ENCODE measurements at regions of chr6 and their contacts with region 1.

Region 1: DNA sequence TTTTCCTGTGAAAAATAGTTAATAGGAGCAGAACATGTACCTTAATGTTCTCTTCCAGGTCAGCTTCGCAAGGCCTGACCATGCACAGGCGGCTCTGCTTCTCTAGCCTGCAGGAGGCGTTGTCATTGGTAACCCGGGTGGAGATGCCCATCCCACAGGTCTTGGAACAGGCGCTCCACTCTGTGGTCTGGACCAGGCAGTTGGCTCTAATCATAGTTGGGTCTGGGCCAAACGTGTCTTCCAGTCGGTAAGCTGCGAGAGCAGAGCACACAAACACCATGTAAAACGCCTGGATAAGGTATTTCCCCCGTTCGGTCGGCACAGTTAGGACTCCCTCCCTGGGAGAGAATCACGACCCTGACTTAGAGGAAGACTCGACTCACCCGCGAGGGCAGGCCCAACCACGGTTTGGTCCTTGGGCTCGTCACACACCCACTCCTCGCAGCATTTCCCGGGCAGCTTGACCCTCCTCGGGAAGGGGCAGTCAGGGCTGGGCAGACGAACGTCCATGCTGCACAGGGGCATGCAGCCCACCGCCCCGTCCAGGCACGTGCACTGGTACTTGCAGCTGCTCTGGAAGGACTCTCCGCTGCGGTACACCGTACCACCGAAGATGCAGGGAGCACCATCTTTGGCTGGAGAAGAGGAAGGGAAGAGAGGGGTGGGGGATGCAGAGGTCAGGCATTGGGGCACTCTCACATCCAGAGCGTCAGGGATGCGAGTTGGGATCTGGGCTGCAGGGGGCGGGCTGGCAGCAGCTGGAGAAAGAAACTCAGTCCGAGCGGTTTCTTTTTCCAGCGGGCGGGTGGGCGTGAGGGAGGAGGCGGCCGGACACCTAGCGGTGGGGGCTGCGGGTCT is 1.0 kb downstream of the CCN2 start:
- DNase-seq: peak; percentile 42
- H3K4me3 ChIP-seq: peak overlapping the region; percentile 60
- H3K27me3 ChIP-seq: no peaks in the 10 kb centered on the region
- CTCF ChIP-seq: peak; percentile 71

Region 2: GRCh38 chr6:131982740-131983259 is 32.7 kb after region 1 on chr6:
- CTCF ChIA-PET with region 1: interaction called, 3 read pairs
- POLR2A ChIA-PET with region 1: interaction called, 15 read pairs
- DNase-seq: peak; percentile 70
- H3K4me3 ChIP-seq: no peak overlapping the region
- H3K27me3 ChIP-seq: no peaks in the 10 kb centered on the region
- CTCF ChIP-seq: no peak

Region 3: DNA sequence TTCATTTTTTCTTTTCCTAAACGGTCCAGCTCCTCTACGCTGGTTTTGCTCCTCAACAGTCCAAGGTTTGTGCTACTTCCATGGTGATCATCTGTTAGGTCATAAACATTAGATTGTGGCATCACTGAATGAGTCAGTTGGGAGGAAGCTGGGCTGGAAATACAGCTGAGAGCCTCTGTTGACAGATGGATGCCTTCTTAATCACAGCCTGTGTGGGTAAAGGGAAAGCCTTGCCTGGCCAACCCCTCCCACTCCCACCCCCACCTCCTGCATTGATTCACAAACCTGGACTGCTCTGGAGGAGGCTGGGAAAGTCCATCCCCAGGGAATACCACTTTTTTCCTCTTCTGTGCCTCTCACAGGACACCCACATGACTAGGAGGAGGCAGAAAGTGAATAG is 181.6 kb after region 1 on chr6:
- CTCF ChIA-PET with region 1: interaction called, 5 read pairs
- POLR2A ChIA-PET with region 1: interaction called, 15 read pairs
- DNase-seq: peak; percentile 98
- H3K4me3 ChIP-seq: no peak overlapping the region
- H3K27me3 ChIP-seq: no peaks in the 10 kb centered on the region
- CTCF ChIP-seq: no peak

Region 4: DNA sequence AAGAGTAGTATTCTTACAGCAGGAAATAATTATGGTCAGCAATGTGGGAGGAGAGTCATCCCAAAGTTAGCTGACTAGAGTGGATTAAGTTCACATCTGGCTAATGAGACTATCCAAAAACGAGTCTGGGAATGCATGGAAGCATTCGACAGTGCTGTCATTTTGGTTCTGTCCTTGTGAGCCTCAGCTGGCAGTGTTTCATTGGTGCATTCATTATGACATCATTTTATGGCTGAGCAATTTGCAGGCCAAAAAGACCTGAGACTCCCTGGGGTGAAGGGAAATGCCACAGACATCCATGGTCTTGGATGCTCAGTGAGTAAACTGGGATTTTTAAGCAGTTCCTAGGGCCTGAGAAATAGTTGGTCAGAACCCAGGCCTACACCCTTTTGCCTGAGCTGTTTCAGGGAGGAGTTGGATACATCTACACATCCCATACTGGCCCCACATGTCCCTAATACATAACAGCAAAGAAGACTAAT is 197.4 kb after region 1 on chr6:
- CTCF ChIA-PET with region 1: interaction called, 3 read pairs
- POLR2A ChIA-PET with region 1: interaction called, 11 read pairs
- DNase-seq: peak; percentile 100
- H3K4me3 ChIP-seq: no peak overlapping the region
- H3K27me3 ChIP-seq: no peaks in the 10 kb centered on the region
- CTCF ChIP-seq: no peak

Region 5: GRCh38 chr6:132218059-132218696 is 268.0 kb after region 1 on chr6:
- CTCF ChIA-PET with region 1: interaction called, 11 read pairs
- POLR2A ChIA-PET with region 1: interaction called, 5 read pairs
- DNase-seq: no peak
- H3K4me3 ChIP-seq: no peak overlapping the region
- H3K27me3 ChIP-seq: no peaks in the 10 kb centered on the region
- CTCF ChIP-seq: peak; percentile 49

Region 6: GRCh38 chr6:132227904-132228303 is 277.8 kb after region 1 on chr6:
- CTCF ChIA-PET with region 1: interaction called, 3 read pairs
- POLR2A ChIA-PET with region 1: interaction called, 10 read pairs
- DNase-seq: peak; percentile 77
- H3K4me3 ChIP-seq: no peak overlapping the region
- H3K27me3 ChIP-seq: peaks cover 4% of the 10 kb centered on the region
- CTCF ChIP-seq: no peak

Region 7: GRCh38 chr6:132354512-132355167 is 404.5 kb after region 1 on chr6:
- CTCF ChIA-PET with region 1: no interaction called
- POLR2A ChIA-PET with region 1: no interaction called
- DNase-seq: no peak
- H3K4me3 ChIP-seq: no peak overlapping the region
- H3K27me3 ChIP-seq: no peaks in the 10 kb centered on the region
- CTCF ChIP-seq: no peak

Region 8: GRCh38 chr6:132401120-132401945 is 451.2 kb after region 1 on chr6 and contains the start of gene MOXD1:
- CTCF ChIA-PET with region 1: no interaction called
- POLR2A ChIA-PET with region 1: no interaction called
- DNase-seq: no peak
- H3K4me3 ChIP-seq: peak within 1 kb of the TSS; percentile 95
- H3K27me3 ChIP-seq: peaks cover 1% of the 10 kb centered on the region; the same call in 1 of the 2 replicates
- CTCF ChIP-seq: no peak
- polyA plus RNA-seq, gene MOXD1: 71.3 and 121 TPM in 2 replicates

Measured in BJ (cell line).